Natural killer cell (primary cell): ENCODE measurements at regions of chr3 and their contacts with region 1.

Region 1: GRCh38 chr3:112561731-112562688 is at the starts of genes ATG3 and SLC35A5:
- DNase-seq: peak; percentile 98 to 99
- ATAC-seq: peak; percentile 80 to 94 (median 86)
- H3K4me3 ChIP-seq: peak within 1 kb of the TSS; percentile 92
- H3K4me3 Mint-ChIP-seq: peak within 1 kb of the TSS; percentile 95
- H3K27ac ChIP-seq: peak within 1 kb of the TSS; percentile 96
- H3K27ac Mint-ChIP-seq: peak within 1 kb of the TSS; percentile 96 to 97
- H3K4me1 ChIP-seq: peaks cover 15% of the 10 kb centered on the region
- H3K4me1 Mint-ChIP-seq: peaks cover 46 to 47% of the 10 kb centered on the region in 2 donors
- H3K27me3 ChIP-seq: no peaks in the 10 kb centered on the region
- H3K27me3 Mint-ChIP-seq: no peaks in the 10 kb centered on the region
- CTCF ChIP-seq: no peak
- total RNA-seq, gene ATG3: 49.4 to 53.6 (median 52.0) TPM
- total RNA-seq, gene SLC35A5: 10.5 to 17.4 (median 11.2) TPM

Region 2: GRCh38 chr3:111978493-111979433 is 583.2 kb before region 1 on chr3 and contains the start of gene ABHD10:
- intact Hi-C with region 1: loop called (anchors 5 kb)
- DNase-seq: peak; percentile 92 to 100
- ATAC-seq: peak; percentile 93 to 95 (median 93)
- H3K4me3 ChIP-seq: peak within 1 kb of the TSS; percentile 95
- H3K4me3 Mint-ChIP-seq: peak within 1 kb of the TSS; percentile 93
- H3K27ac ChIP-seq: peak within 1 kb of the TSS; percentile 82
- H3K27ac Mint-ChIP-seq: peak within 1 kb of the TSS; percentile 91 to 93
- H3K4me1 ChIP-seq: peaks cover 12% of the 10 kb centered on the region
- H3K4me1 Mint-ChIP-seq: peaks cover 19 to 31% of the 10 kb centered on the region in 2 donors
- H3K27me3 ChIP-seq: no peaks in the 10 kb centered on the region
- H3K27me3 Mint-ChIP-seq: no peaks in the 10 kb centered on the region
- CTCF ChIP-seq: no peak
- total RNA-seq, gene ABHD10: 21.6 to 24.0 (median 22.6) TPM